A549 (cell line): ENCODE measurements at regions of chr12 and their contacts with region 1.

Region 1: GRCh38 chr12:25332143-25332542 is 81.4 kb upstream of the KRAS start:
- DNase-seq: no peak
- ATAC-seq: no peak
- H3K4me3 ChIP-seq: no peak overlapping the region
- H3K27ac ChIP-seq: no peak overlapping the region
- H3K4me1 ChIP-seq: peaks cover 12% of the 10 kb centered on the region; the same call in 2 of the 3 replicates
- CTCF ChIP-seq: no peak
- EP300 ChIP-seq: no peak
- POLR2A ChIP-seq: no peak
- RAD21 ChIP-seq: no peak

Region 2: GRCh38 chr12:25319233-25319984 is 12.7 kb before region 1 on chr12:
- CTCF ChIA-PET with region 1: interaction called, 4 read pairs
- POLR2A ChIA-PET with region 1: interaction called, 11 read pairs
- DNase-seq: no peak
- ATAC-seq: no peak
- H3K4me3 ChIP-seq: no peak overlapping the region
- H3K27ac ChIP-seq: no peak overlapping the region
- H3K4me1 ChIP-seq: no peaks in the 10 kb centered on the region
- CTCF ChIP-seq: no peak
- EP300 ChIP-seq: no peak
- POLR2A ChIP-seq: no peak
- RAD21 ChIP-seq: no peak